ENCODE measurements at regions of chr5 and their contacts with region 1.

Region 1: DNA sequence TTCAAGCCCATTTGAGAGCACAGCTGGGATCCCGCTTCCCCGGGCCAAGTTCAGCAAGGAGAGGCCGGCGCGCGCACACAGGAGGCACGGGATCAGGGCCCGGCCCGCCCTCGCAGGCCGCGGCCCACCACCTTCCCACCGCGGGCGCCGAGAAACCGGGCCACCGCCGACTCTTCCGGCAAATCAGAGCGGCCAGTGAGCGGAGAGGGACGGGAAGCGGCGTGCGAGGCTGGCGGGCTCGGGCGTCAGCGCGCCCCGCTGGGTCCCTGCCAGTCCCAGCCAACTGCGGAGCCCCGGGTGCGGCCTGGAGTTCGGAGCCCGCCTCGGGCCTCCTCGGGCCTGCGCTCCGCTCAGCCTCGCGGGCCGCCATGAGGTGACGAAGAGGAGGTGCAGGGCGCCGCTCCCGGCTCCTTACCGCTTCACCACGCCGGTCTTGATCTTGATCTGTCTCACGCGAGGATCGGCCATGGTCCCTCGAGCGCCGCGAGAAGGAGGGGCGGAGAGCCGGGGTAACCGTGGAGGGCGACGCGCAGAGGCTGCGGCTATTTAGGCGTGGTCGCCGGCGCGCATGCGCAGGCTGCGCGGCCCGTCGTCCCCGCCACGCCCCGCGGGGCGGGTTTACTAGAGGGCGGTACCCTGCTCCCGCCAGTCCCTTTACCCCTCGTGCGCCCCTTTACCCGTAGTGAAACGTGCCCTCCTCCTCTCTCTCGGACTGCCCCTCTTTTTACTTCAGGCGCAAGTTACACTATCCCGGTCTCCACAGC is at the start of gene TBCA:
- DNase-seq: peak; percentile 94
- H3K4me3 ChIP-seq: peak within 1 kb of the TSS; percentile 77
- H3K27ac ChIP-seq: peak within 1 kb of the TSS; percentile 80
- H3K4me1 ChIP-seq: peaks cover 30% of the 10 kb centered on the region
- CTCF ChIP-seq: peak; percentile 47; the same call in 1 of the 2 replicates
- total RNA-seq, gene TBCA: 174 and 214 TPM in 2 replicates

Region 2: DNA sequence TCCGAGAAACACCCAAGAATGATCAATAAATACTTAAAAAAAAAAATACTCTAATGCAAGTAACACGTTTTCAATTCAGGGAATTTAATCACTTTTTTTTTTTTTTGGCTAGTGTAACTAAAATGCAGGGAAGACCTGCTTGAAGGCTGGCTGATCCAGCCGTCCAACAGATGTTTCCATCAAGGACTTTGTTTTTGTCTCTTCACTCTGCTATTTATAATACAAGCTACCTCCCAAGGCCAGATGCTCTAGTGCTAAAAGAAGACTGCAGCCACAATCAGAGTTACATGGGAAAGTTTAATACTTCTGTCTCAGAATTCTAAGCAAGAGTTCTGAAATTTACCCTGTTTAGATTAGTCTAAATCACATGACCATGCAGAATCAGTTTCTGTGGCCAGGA is 14.4 kb before region 1 on chr5:
- CTCF ChIA-PET with region 1: no interaction called
- POLR2A ChIA-PET with region 1: no interaction called
- intact Hi-C with region 1: no loop called
- DNase-seq: no peak
- H3K4me3 ChIP-seq: no peak overlapping the region
- H3K27ac ChIP-seq: no peak overlapping the region
- H3K4me1 ChIP-seq: no peaks in the 10 kb centered on the region
- CTCF ChIP-seq: no peak

Region 3: DNA sequence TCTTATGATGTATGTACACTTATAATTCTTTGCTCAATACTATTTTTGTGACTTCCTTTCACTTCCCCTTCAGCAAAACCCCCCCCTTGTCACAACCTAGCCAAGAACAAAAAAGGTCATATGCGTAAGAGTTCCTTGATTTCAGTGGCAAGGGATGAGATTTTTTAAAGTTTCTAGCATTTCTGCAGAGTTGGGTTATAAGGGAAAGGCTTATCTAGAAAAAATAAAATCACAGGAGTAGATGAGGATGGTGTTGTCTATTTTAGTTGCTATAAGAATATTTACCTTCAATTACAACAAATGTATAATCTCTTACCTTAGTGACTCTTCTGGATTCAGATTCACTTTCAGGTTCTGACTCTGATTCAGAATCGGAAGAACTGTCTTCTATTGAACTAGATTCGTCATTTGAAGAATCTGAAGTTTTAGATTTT is 333.9 kb after region 1 on chr5:
- CTCF ChIA-PET with region 1: no interaction called
- POLR2A ChIA-PET with region 1: no interaction called
- intact Hi-C with region 1: loop called (anchors 10 kb)
- DNase-seq: peak; percentile 59
- H3K4me3 ChIP-seq: no peak overlapping the region
- H3K27ac ChIP-seq: peak overlapping the region; percentile 49
- H3K4me1 ChIP-seq: peaks cover 64% of the 10 kb centered on the region
- CTCF ChIP-seq: no peak

Region 4: GRCh38 chr5:78467752-78468357 is 691.9 kb after region 1 on chr5:
- CTCF ChIA-PET with region 1: no interaction called
- POLR2A ChIA-PET with region 1: no interaction called
- intact Hi-C with region 1: no loop called
- DNase-seq: peak; percentile 70
- H3K4me3 ChIP-seq: no peak overlapping the region
- H3K27ac ChIP-seq: no peak overlapping the region
- H3K4me1 ChIP-seq: no peaks in the 10 kb centered on the region
- CTCF ChIP-seq: peak; percentile 96

Measured in OCI-LY7 (cell line).